K562 (cell line): ENCODE measurements at regions of chr4 and their contacts with region 1.

Region 1: GRCh38 chr4:74874753-74875367 is 58.1 kb upstream of the PARM1 start:
- DNase-seq: peak; percentile 46 to 72 (median 62)
- ATAC-seq: peak; percentile 94
- H3K4me3 ChIP-seq: no peak overlapping the region
- H3K27ac ChIP-seq: no peak overlapping the region
- H3K4me1 ChIP-seq: no peaks in the 10 kb centered on the region
- H3K27me3 ChIP-seq: no peaks in the 10 kb centered on the region; a peak in 1 of 5 replicates
- CTCF ChIP-seq: peak; percentile 69 to 77 (median 74)
- EP300 ChIP-seq: no peak
- POLR2A ChIP-seq: no peak
- RAD21 ChIP-seq: peak; percentile 60 to 77

Region 2: GRCh38 chr4:74715706-74716435 is 159.0 kb before region 1 on chr4:
- CTCF ChIA-PET with region 1: no interaction called
- POLR2A ChIA-PET with region 1: no interaction called
- in situ Hi-C with region 1: no loop called
- intact Hi-C with region 1: no loop called
- DNase-seq: no peak
- ATAC-seq: no peak
- H3K4me3 ChIP-seq: no peak overlapping the region
- H3K27ac ChIP-seq: no peak overlapping the region
- H3K4me1 ChIP-seq: no peaks in the 10 kb centered on the region
- H3K27me3 ChIP-seq: no peaks in the 10 kb centered on the region
- CTCF ChIP-seq: no peak
- EP300 ChIP-seq: no peak
- POLR2A ChIP-seq: no peak
- RAD21 ChIP-seq: no peak

Region 3: GRCh38 chr4:74855879-74856278 is 19.0 kb before region 1 on chr4:
- CTCF ChIA-PET with region 1: no interaction called
- POLR2A ChIA-PET with region 1: no interaction called
- in situ Hi-C with region 1: no loop called
- intact Hi-C with region 1: no loop called
- DNase-seq: no peak
- ATAC-seq: no peak
- H3K4me3 ChIP-seq: no peak overlapping the region
- H3K27ac ChIP-seq: no peak overlapping the region
- H3K4me1 ChIP-seq: no peaks in the 10 kb centered on the region
- H3K27me3 ChIP-seq: no peaks in the 10 kb centered on the region
- CTCF ChIP-seq: no peak
- EP300 ChIP-seq: no peak
- POLR2A ChIP-seq: no peak
- RAD21 ChIP-seq: no peak

Region 4: GRCh38 chr4:75030733-75031132 is 155.9 kb after region 1 on chr4:
- CTCF ChIA-PET with region 1: no interaction called
- POLR2A ChIA-PET with region 1: no interaction called
- in situ Hi-C with region 1: no loop called
- intact Hi-C with region 1: no loop called
- DNase-seq: no peak
- ATAC-seq: no peak
- H3K4me3 ChIP-seq: no peak overlapping the region
- H3K27ac ChIP-seq: no peak overlapping the region
- H3K4me1 ChIP-seq: no peaks in the 10 kb centered on the region
- H3K27me3 ChIP-seq: peaks cover 3 to 9% of the 10 kb centered on the region in 2 experiments; a peak in 2 of 5 replicates
- CTCF ChIP-seq: no peak
- EP300 ChIP-seq: no peak
- POLR2A ChIP-seq: no peak
- RAD21 ChIP-seq: no peak

Region 5: GRCh38 chr4:75289914-75290582 is 415.2 kb after region 1 on chr4:
- CTCF ChIA-PET with region 1: interaction called, 3 read pairs
- POLR2A ChIA-PET with region 1: no interaction called
- in situ Hi-C with region 1: no loop called
- intact Hi-C with region 1: loop called (anchors 5 kb)
- DNase-seq: peak in 1 of 4 experiments; percentile 18
- ATAC-seq: peak; percentile 27; the same call in 1 of the 3 replicates
- H3K4me3 ChIP-seq: no peak overlapping the region
- H3K27ac ChIP-seq: no peak overlapping the region
- H3K4me1 ChIP-seq: no peaks in the 10 kb centered on the region
- H3K27me3 ChIP-seq: peaks cover 0 to 3% of the 10 kb centered on the region in 2 experiments; a peak in 1 of 5 replicates
- CTCF ChIP-seq: peak; percentile 24 to 37 (median 35); a peak in 4 of 6 replicates
- EP300 ChIP-seq: no peak
- POLR2A ChIP-seq: no peak
- RAD21 ChIP-seq: peak; percentile 6 to 21; a peak in 1 of 4 replicates

Region 6: DNA sequence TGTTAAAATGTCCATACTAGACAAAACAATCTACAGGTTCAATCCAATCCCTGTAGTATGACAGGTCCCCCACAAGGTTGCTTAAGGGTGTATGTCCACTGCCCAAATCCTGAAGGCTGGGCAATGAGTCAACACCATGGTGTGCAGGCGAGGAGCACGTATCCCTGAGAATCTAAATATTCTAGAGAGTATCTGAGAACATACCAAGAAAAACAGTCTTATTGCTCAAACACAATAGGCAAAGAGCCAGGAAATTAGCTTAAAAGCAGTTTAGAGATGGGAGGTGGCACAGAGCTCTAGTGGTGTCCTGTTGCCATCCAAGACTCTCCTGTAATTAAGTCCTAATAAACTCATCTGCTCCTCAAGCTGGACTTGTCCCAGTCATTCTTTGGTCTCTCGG is 602.3 kb after region 1 on chr4:
- CTCF ChIA-PET with region 1: no interaction called
- POLR2A ChIA-PET with region 1: no interaction called
- in situ Hi-C with region 1: no loop called
- intact Hi-C with region 1: loop called (anchors 10 kb)
- DNase-seq: no peak
- ATAC-seq: no peak
- H3K4me3 ChIP-seq: no peak overlapping the region
- H3K27ac ChIP-seq: no peak overlapping the region
- H3K4me1 ChIP-seq: no peaks in the 10 kb centered on the region
- H3K27me3 ChIP-seq: no peaks in the 10 kb centered on the region
- CTCF ChIP-seq: no peak
- EP300 ChIP-seq: no peak
- POLR2A ChIP-seq: no peak
- RAD21 ChIP-seq: no peak